ENCODE measurements at regions of chr9 and their contacts with region 1.

Region 1: GRCh38 chr9:85940832-85941621 is at the start of gene NAA35:
- DNase-seq: peak; percentile 95 to 99 (median 99)
- ATAC-seq: peak; percentile 94
- H3K4me3 ChIP-seq: peak within 1 kb of the TSS; percentile 75
- H3K4me3 Mint-ChIP-seq: peak within 1 kb of the TSS in 6 of 10 donors; percentile 83 to 95 (median 90)
- H3K27ac ChIP-seq: peak within 1 kb of the TSS; percentile 96
- H3K27ac Mint-ChIP-seq: peak within 1 kb of the TSS in 8 of 9 donors; percentile 90 to 97 (median 95)
- H3K4me1 ChIP-seq: peaks cover 25 to 26% of the 10 kb centered on the region in 2 donors
- H3K4me1 Mint-ChIP-seq: peaks cover 0 to 21% (median 12%) of the 10 kb centered on the region in 7 donors
- H3K27me3 ChIP-seq: no peaks in the 10 kb centered on the region
- H3K27me3 Mint-ChIP-seq: peaks cover 0 to 3% (median 0%) of the 10 kb centered on the region in 5 donors
- total RNA-seq, gene NAA35: 18.2 to 28.6 (median 26.0) TPM

Region 2: DNA sequence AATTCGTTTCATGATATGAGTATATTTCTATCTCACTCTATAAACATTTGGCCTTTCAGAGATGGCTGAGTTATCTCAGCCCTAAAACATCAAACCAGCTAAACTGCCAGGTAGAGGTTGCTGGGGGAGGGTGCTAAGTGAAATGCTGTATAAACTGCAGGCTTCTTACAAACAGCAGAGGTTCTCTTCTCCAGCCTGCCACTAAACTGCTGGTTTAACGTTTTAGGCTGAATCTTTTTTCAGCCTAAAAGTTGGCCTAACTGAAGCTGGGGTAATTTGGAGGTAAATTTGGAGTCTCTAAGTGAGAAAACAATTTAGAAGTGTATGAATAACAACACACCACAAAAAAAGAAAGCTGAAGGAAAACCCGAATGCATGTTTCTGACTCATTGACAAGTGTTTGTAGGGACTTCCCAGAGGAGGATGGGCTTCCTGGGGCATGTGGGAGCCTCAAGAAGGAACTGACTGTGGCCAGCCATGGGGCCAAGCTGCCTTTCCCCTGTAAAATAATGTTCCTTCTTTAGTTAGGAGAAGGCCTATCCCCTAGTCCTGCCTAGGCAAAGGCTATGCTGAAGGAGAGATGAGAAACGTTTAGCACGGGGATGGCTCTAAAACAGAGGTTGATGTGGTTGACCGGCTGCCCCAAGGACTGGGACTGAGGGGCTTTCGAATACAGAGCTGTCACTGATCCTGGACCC is 1644.7 kb before region 1 on chr9:
- CTCF ChIA-PET with region 1: no interaction called
- POLR2A ChIA-PET with region 1: no interaction called
- intact Hi-C with region 1: loop called in 1 of 2 experiments (anchors 10 kb)
- DNase-seq: peak in 2 of 9 donors; percentile 9 to 61
- ATAC-seq: peak; percentile 79
- H3K4me3 ChIP-seq: no peak overlapping the region
- H3K4me3 Mint-ChIP-seq: peak overlapping the region in 6 of 10 donors; percentile 5 to 71 (median 44)
- H3K27ac ChIP-seq: peak overlapping the region; percentile 6
- H3K27ac Mint-ChIP-seq: peak overlapping the region; percentile 54 to 100 (median 79)
- H3K4me1 ChIP-seq: peaks cover 8 to 32% of the 10 kb centered on the region in 2 donors
- H3K4me1 Mint-ChIP-seq: peaks cover 19 to 74% (median 48%) of the 10 kb centered on the region in 7 donors
- H3K27me3 ChIP-seq: no peaks in the 10 kb centered on the region
- H3K27me3 Mint-ChIP-seq: no peaks in the 10 kb centered on the region

Region 3: GRCh38 chr9:85741875-85742629 is 199.0 kb before region 1 on chr9 and contains the start of gene AGTPBP1:
- CTCF ChIA-PET with region 1: no interaction called
- POLR2A ChIA-PET with region 1: interaction called, 3 read pairs
- intact Hi-C with region 1: loop called (anchors 1 kb)
- DNase-seq: peak; percentile 95 to 99 (median 97)
- ATAC-seq: peak; percentile 93
- H3K4me3 ChIP-seq: peak within 1 kb of the TSS; percentile 88
- H3K4me3 Mint-ChIP-seq: peak within 1 kb of the TSS; percentile 90 to 99 (median 95)
- H3K27ac ChIP-seq: peak within 1 kb of the TSS; percentile 93
- H3K27ac Mint-ChIP-seq: peak within 1 kb of the TSS; percentile 91 to 99 (median 95)
- H3K4me1 ChIP-seq: peaks cover 0 to 14% of the 10 kb centered on the region in 2 donors
- H3K4me1 Mint-ChIP-seq: peaks cover 14 to 48% (median 33%) of the 10 kb centered on the region in 7 donors
- H3K27me3 ChIP-seq: no peaks in the 10 kb centered on the region
- H3K27me3 Mint-ChIP-seq: peaks cover 0 to 18% (median 0%) of the 10 kb centered on the region in 5 donors
- total RNA-seq, gene AGTPBP1: 31.9 to 85.7 (median 59.6) TPM

Region 4: DNA sequence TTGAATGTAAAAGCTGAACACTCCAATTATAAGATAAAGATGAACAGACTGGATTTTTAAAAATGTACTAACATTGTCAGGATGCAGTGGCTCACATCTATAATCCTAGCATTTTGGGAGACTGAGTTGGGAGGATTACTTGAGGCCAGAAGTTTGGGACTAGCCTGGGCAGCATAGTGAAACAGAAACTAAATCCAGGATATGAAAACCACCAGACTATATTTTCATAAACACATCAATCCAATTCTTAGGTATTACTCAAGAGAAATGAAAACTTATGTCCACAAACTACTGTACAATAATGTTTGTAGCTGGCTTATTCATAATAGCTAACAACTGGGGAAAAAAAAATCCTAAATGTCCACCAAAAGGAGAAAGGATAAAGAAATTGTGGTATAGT is 26.9 kb before region 1 on chr9:
- CTCF ChIA-PET with region 1: interaction called, 3 read pairs
- POLR2A ChIA-PET with region 1: no interaction called
- intact Hi-C with region 1: loop called in 1 of 2 experiments (anchors 1 kb)
- DNase-seq: no peak
- ATAC-seq: no peak
- H3K4me3 ChIP-seq: no peak overlapping the region
- H3K4me3 Mint-ChIP-seq: peak overlapping the region in 5 of 10 donors; percentile 4 to 51 (median 26)
- H3K27ac ChIP-seq: no peak overlapping the region
- H3K27ac Mint-ChIP-seq: peak overlapping the region in 4 of 9 donors; percentile 4 to 63 (median 20)
- H3K4me1 ChIP-seq: no peaks in the 10 kb centered on the region
- H3K4me1 Mint-ChIP-seq: peaks cover 4 to 15% (median 11%) of the 10 kb centered on the region in 7 donors
- H3K27me3 ChIP-seq: no peaks in the 10 kb centered on the region
- H3K27me3 Mint-ChIP-seq: peaks cover 0 to 12% (median 0%) of the 10 kb centered on the region in 5 donors

Region 5: GRCh38 chr9:86098824-86099700 is 158.0 kb after region 1 on chr9 and contains the start of gene GOLM1:
- CTCF ChIA-PET with region 1: no interaction called
- POLR2A ChIA-PET with region 1: no interaction called
- intact Hi-C with region 1: loop called in 1 of 2 experiments (anchors 2 kb)
- DNase-seq: peak in 2 of 9 donors; percentile 23 to 67
- ATAC-seq: peak; percentile 83
- H3K4me3 ChIP-seq: peak within 1 kb of the TSS; percentile 46
- H3K4me3 Mint-ChIP-seq: peak within 1 kb of the TSS; percentile 77 to 94 (median 86)
- H3K27ac ChIP-seq: no peak within 1 kb of the TSS
- H3K27ac Mint-ChIP-seq: peak within 1 kb of the TSS in 1 of 9 donors; percentile 53
- H3K4me1 ChIP-seq: no peaks in the 10 kb centered on the region
- H3K4me1 Mint-ChIP-seq: peaks cover 9 to 14% (median 10%) of the 10 kb centered on the region in 7 donors
- H3K27me3 ChIP-seq: peaks cover 0 to 4% of the 10 kb centered on the region in 2 donors
- H3K27me3 Mint-ChIP-seq: peaks cover 42 to 71% (median 50%) of the 10 kb centered on the region in 5 donors
- total RNA-seq, gene GOLM1: 0.13 to 4.3 (median 1.4) TPM in 4 of 5 experiments, not detected in the other

Region 6: DNA sequence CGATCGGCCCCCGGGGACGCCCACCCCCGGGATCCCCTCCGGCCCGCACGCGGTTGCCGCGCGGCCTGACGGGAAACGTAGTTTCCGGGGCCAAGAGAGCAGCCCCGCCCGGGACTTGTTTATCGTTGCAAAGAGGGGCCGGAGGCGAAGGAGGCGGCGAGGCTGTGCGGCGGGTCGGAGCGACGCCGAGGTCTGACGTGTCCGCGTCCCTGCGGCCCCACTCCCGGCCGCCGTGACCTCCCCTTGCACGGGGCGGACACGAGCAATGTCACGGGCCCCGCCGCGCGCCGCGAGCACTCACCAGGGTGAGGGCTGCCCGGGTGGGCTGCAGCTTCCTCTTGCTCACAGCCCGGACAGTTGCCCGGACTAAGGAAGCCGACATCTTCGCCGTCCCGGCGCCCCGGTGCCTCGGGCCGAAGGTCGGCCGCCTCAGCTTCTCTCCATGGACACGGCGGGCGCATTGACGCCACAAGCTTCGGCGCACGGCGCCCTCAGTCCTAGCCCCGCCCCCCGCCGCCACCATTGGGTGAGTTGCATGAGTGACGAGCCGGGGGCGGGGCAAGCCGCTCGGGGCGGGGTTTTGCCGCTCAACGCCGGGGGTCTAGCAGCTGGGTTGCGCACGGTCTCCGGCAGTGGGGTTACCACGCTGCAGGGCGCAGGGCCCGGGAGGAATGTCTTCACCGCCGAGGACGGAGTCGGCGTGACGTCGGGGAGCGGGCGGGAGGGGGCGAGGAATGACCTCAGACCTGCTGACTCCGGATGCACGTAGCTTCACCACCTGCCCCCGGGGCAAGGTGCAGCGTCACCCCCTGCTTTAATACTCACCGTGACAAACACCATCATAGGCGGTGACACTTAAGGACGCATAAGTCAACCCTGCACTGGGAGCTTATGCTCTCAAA is 341.3 kb after region 1 on chr9 and contains the start of gene ISCA1:
- CTCF ChIA-PET with region 1: no interaction called
- POLR2A ChIA-PET with region 1: interaction called, 4 read pairs
- intact Hi-C with region 1: loop called (anchors 1 kb)
- DNase-seq: peak; percentile 97 to 99 (median 97)
- ATAC-seq: peak; percentile 92
- H3K4me3 ChIP-seq: peak within 1 kb of the TSS; percentile 89
- H3K4me3 Mint-ChIP-seq: peak within 1 kb of the TSS; percentile 85 to 98 (median 94)
- H3K27ac ChIP-seq: peak within 1 kb of the TSS; percentile 99
- H3K27ac Mint-ChIP-seq: peak within 1 kb of the TSS; percentile 90 to 98 (median 96)
- H3K4me1 ChIP-seq: peaks cover 14 to 17% of the 10 kb centered on the region in 2 donors
- H3K4me1 Mint-ChIP-seq: peaks cover 30 to 53% (median 48%) of the 10 kb centered on the region in 7 donors
- H3K27me3 ChIP-seq: no peaks in the 10 kb centered on the region
- H3K27me3 Mint-ChIP-seq: no peaks in the 10 kb centered on the region
- total RNA-seq, gene ISCA1: 26.3 to 62.3 (median 38.4) TPM

Region 7: DNA sequence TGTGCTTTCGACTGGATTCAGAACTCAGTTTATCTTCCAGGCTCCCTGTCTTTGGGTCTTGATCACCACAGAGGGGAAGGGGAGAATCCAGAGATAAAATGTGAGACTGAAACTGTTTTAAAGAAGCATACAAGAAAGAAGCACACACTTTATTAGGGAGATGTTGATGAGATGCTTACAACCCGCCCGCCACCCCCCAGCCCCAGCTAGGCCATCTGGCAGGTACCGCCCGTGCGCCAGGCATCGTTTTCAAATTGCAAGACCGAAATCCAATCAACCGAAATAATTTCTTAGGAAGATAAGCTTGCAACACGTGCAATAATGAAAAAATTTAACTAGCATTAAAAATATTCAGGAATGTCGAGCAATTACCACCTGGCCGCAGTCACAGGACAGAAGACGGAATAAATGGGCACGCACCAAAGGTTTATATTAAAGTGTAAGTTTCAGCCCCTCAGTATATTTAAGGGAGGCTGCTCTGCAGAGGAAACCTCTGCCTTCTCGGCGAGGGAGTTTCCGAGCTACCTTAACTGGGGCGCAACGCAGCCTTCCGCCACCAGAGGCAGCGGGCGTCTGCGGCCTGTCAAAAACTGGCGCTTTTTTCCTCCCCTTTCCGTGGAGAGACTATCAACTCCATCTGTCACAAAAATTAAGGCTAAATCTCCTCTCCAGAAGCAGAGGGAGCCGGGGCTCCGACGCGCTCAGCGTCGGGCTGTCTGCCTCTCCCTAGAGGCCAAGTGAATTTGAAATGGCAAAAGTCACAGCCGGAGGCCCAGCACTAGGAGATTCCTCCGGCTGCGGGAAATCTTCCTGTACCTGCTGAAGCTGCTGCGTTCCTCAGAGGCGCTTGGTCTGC is 1007.3 kb after region 1 on chr9:
- CTCF ChIA-PET with region 1: no interaction called
- POLR2A ChIA-PET with region 1: no interaction called
- intact Hi-C with region 1: loop called in 1 of 2 experiments (anchors 2 kb)
- DNase-seq: peak; percentile 50 to 70 (median 66)
- ATAC-seq: peak; percentile 80
- H3K4me3 ChIP-seq: peak overlapping the region; percentile 47
- H3K4me3 Mint-ChIP-seq: peak overlapping the region; percentile 80 to 95 (median 90)
- H3K27ac ChIP-seq: no peak overlapping the region
- H3K27ac Mint-ChIP-seq: peak overlapping the region in 5 of 9 donors; percentile 13 to 75 (median 52)
- H3K4me1 ChIP-seq: peaks cover 5 to 13% of the 10 kb centered on the region in 2 donors
- H3K4me1 Mint-ChIP-seq: peaks cover 7 to 26% (median 15%) of the 10 kb centered on the region in 7 donors
- H3K27me3 ChIP-seq: peaks cover 6 to 16% of the 10 kb centered on the region in 2 donors
- H3K27me3 Mint-ChIP-seq: peaks cover 12 to 35% (median 19%) of the 10 kb centered on the region in 5 donors

Measured in naive thymus-derived CD4-positive, alpha-beta T cell (primary cell).